CD4-positive, alpha-beta T cell (primary cell): ENCODE measurements at regions of chr1 and their contacts with region 1.

Region 1: GRCh38 chr1:27102707-27103491 is 52.0 kb downstream of the SLC9A1 start:
- DNase-seq: peak; percentile 58 to 89 (median 78)
- ATAC-seq: peak; percentile 92
- H3K4me3 ChIP-seq: no peak overlapping the region
- H3K4me3 Mint-ChIP-seq: no peak overlapping the region
- H3K27ac ChIP-seq: no peak overlapping the region
- H3K27ac Mint-ChIP-seq: no peak overlapping the region
- H3K4me1 ChIP-seq: peaks cover 12% of the 10 kb centered on the region
- H3K4me1 Mint-ChIP-seq: no peaks in the 10 kb centered on the region
- H3K27me3 ChIP-seq: no peaks in the 10 kb centered on the region
- H3K27me3 Mint-ChIP-seq: no peaks in the 10 kb centered on the region
- CTCF ChIP-seq: peak; percentile 91

Region 2: DNA sequence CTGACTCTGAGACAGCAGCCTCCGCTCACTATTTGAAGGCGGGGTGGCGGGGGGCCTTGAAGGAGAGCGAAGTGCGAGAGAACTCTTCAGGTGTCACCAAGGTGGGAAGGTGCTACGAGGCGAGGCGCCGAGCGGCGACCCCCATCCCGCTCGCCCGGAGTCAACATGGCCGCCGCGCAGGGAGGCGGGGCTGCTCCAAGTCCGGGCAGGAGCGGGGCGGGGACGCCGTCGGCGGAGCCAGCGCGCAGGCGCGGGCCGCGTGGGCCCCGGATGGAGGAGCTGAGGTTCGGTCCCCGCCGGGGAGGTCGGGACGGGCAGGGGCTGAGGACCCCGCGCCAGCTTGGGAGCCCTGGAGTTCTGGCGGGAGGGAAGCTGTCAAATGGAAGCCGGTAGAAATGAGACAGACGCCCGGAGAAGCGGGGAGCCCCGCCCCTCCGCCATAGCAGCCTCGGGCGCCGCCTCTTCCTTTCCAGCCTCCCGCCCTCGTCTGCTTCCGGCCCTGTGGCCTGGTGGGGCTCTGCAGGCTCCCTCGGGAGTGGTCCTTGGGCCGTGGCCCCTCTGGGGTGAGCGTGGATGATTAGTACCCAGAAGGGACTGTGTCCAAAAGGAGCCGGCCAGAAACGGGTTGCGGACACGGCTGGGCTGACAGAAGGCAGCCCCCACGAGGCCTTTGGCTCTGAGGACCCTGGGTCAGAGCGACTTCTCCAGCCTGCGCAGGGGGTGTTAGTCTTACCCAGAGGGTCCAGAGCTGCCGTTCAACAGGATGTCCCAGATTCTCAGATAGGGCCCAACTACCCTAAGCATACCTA is 315.0 kb before region 1 on chr1 and contains the start of gene PIGV:
- CTCF ChIA-PET with region 1: no interaction called
- POLR2A ChIA-PET with region 1: no interaction called
- intact Hi-C with region 1: no loop called
- DNase-seq: peak; percentile 76 to 94 (median 86)
- ATAC-seq: peak; percentile 69
- H3K4me3 ChIP-seq: peak within 1 kb of the TSS; percentile 84
- H3K4me3 Mint-ChIP-seq: peak within 1 kb of the TSS; percentile 98
- H3K27ac ChIP-seq: peak within 1 kb of the TSS; percentile 95 to 97
- H3K27ac Mint-ChIP-seq: peak within 1 kb of the TSS; percentile 96
- H3K4me1 ChIP-seq: peaks cover 70% of the 10 kb centered on the region
- H3K4me1 Mint-ChIP-seq: peaks cover 71% of the 10 kb centered on the region
- H3K27me3 ChIP-seq: no peaks in the 10 kb centered on the region
- H3K27me3 Mint-ChIP-seq: no peaks in the 10 kb centered on the region
- CTCF ChIP-seq: no peak
- total RNA-seq, gene PIGV: 3.8 to 4.7 TPM

Region 3: GRCh38 chr1:27203946-27204345 is 101.0 kb after region 1 on chr1:
- CTCF ChIA-PET with region 1: interaction called, 4 read pairs
- POLR2A ChIA-PET with region 1: no interaction called
- intact Hi-C with region 1: loop called in 1 of 2 experiments (anchors 2 kb)
- DNase-seq: no peak
- ATAC-seq: no peak
- H3K4me3 ChIP-seq: no peak overlapping the region
- H3K4me3 Mint-ChIP-seq: no peak overlapping the region
- H3K27ac ChIP-seq: no peak overlapping the region
- H3K27ac Mint-ChIP-seq: no peak overlapping the region
- H3K4me1 ChIP-seq: no peaks in the 10 kb centered on the region
- H3K4me1 Mint-ChIP-seq: no peaks in the 10 kb centered on the region
- H3K27me3 ChIP-seq: no peaks in the 10 kb centered on the region
- H3K27me3 Mint-ChIP-seq: no peaks in the 10 kb centered on the region
- CTCF ChIP-seq: no peak

Region 4: GRCh38 chr1:27284425-27285273 is 181.8 kb after region 1 on chr1:
- CTCF ChIA-PET with region 1: interaction called, 24 read pairs
- POLR2A ChIA-PET with region 1: interaction called, 4 read pairs
- intact Hi-C with region 1: loop called (anchors 1 kb)
- DNase-seq: peak; percentile 74 to 95 (median 88)
- ATAC-seq: peak; percentile 98
- H3K4me3 ChIP-seq: no peak overlapping the region
- H3K4me3 Mint-ChIP-seq: no peak overlapping the region
- H3K27ac ChIP-seq: no peak overlapping the region
- H3K27ac Mint-ChIP-seq: peak overlapping the region; percentile 42
- H3K4me1 ChIP-seq: no peaks in the 10 kb centered on the region
- H3K4me1 Mint-ChIP-seq: peaks cover 13% of the 10 kb centered on the region
- H3K27me3 ChIP-seq: no peaks in the 10 kb centered on the region
- H3K27me3 Mint-ChIP-seq: no peaks in the 10 kb centered on the region
- CTCF ChIP-seq: peak; percentile 84